ENCODE measurements at regions of chr7 and their contacts with region 1.

Region 1: DNA sequence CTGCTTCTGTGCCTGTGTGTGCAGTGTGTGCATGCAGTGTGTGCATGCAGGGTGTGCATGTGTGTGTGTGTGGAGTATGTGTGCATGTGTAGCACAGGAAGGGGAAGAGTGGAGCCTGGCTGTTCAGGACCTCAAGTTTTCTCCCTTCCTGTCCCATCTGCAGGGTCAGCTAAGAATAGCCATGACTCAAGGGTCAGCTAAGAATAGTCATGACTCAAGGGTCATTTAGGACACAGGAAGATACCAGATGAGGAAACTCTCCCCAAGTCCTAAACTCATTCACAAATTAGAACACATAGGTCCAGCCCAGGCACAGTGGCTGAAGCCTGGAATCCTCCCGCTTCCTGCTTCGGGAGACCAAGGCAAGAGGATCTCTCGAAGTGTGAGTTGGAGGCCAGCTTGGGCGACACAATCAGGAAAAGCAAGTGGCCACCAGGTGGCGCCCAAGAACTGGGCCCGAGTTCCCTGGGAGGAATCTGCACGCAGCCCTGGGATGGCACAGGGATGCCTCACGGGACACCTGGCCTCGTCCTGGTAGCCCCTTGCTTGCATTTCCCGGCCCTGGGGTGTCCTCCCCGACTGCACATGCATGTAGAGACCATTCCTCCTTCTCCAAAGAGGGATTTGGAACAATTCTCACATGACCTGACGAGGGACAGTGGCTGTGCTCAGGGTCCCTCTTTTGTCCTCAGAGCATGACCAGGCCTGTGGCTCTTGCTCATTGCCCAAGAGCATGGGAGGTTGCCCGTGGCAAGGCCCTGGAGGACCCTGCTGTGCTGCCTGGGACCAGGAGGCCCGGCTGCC is 21.4 kb upstream of the VOPP1 start:
- DNase-seq: peak; percentile 27 to 73
- ATAC-seq: peak; percentile 54 to 90 (median 72)
- H3K4me3 ChIP-seq: no peak overlapping the region
- H3K27ac ChIP-seq: peak overlapping the region in 2 of 10 donors; percentile 16 to 50
- H3K4me1 ChIP-seq: peaks cover 0 to 14% (median 6%) of the 10 kb centered on the region in 9 donors
- H3K27me3 ChIP-seq: peaks cover 0 to 6% (median 0%) of the 10 kb centered on the region in 7 donors
- CTCF ChIP-seq: peak; percentile 54 to 82 (median 65)

Region 2: DNA sequence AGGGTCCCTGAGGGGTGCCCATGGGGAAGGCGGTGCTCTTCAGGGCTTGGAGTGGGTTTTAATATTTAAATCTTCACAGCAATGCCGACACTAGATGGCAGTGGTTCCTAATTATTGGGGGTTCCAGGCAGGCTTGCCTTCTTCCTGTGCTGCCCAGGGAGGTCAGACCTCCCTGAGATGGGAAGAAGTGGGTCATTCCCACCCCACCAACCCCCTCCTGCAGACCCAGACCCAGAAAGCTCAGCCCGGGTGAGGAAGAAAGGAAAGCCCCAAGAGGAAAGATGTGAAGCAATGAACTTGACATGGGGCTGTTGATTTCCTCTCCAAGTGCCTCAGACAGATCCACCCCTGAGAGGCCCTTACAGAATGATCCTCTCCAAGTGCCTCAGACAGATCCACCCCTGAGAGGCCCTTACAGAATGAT is 313.7 kb before region 1 on chr7:
- intact Hi-C with region 1: loop called in 5 of 10 experiments (anchors 5 to 10 kb)
- DNase-seq: peak in 1 of 2 donors; percentile 67
- ATAC-seq: peak; percentile 71 to 90 (median 86)
- H3K4me3 ChIP-seq: no peak overlapping the region
- H3K27ac ChIP-seq: no peak overlapping the region
- H3K4me1 ChIP-seq: no peaks in the 10 kb centered on the region
- H3K27me3 ChIP-seq: peaks cover 0 to 5% (median 0%) of the 10 kb centered on the region in 7 donors
- CTCF ChIP-seq: peak; percentile 34 to 78 (median 65)

Region 3: DNA sequence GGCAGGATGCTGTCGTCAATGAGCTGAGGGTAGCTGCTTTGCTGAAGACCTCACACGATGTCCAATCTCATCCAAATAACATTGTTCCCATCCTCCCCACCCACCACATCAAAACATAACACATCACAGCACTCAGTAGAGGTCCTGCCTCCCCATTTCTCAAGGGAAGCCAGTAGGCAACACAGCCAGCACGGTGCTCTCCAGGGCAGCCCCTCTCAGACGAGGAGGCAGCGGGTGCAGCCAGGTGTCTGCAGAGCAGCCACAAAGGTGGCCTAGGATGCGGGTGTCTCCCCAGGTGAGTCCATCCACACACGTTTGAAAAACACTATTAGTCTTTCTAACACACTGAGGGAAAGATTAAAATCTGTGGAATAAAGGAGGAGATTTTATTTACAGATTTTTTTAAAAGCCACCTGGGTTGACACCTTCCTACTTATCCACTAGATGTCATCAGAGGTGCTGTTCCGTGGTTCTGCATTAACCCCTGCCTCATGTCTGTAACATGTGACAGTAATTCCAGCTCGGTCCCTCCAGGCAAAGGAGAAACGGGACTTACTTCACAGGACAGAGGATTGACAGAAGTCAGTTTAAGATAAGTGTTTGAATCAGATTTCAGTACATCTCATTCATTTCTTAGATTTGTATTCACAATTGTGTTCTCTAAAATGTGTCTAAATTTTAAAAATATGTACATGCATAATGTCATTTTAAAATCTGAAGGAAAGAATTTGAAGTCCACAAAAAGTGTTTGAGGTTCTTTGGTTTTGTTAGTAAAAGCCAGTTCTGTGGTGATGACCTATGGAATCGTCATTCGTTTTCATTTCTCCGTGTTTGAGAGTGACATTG is 160.6 kb before region 1 on chr7:
- intact Hi-C with region 1: loop called in 9 of 10 experiments (anchors 2 to 10 kb)
- DNase-seq: no peak
- ATAC-seq: peak in 6 of 8 donors; percentile 36 to 71 (median 58)
- H3K4me3 ChIP-seq: no peak overlapping the region
- H3K27ac ChIP-seq: no peak overlapping the region
- H3K4me1 ChIP-seq: peaks cover 0 to 8% (median 0%) of the 10 kb centered on the region in 9 donors
- H3K27me3 ChIP-seq: no peaks in the 10 kb centered on the region
- CTCF ChIP-seq: peak in 8 of 9 donors; percentile 24 to 61 (median 50)

Region 4: GRCh38 chr7:55438757-55439525 is 154.8 kb before region 1 on chr7:
- intact Hi-C with region 1: loop called in 6 of 10 experiments (anchors 5 to 10 kb)
- DNase-seq: peak; percentile 25 to 64
- ATAC-seq: peak in 7 of 8 donors; percentile 27 to 71 (median 55)
- H3K4me3 ChIP-seq: no peak overlapping the region
- H3K27ac ChIP-seq: no peak overlapping the region
- H3K4me1 ChIP-seq: peaks cover 0 to 35% (median 16%) of the 10 kb centered on the region in 9 donors
- H3K27me3 ChIP-seq: no peaks in the 10 kb centered on the region
- CTCF ChIP-seq: no peak